Left colon (tissue), 2 donors: ENCODE measurements at regions of chr1 and their contacts with region 1.

Region 1: GRCh38 chr1:27725374-27726173 is at the start of gene FAM76A:
- DNase-seq: peak; percentile 99 to 100
- ATAC-seq: peak; percentile 93
- total RNA-seq, gene FAM76A: 13.9 to 15.4 TPM

Region 2: DNA sequence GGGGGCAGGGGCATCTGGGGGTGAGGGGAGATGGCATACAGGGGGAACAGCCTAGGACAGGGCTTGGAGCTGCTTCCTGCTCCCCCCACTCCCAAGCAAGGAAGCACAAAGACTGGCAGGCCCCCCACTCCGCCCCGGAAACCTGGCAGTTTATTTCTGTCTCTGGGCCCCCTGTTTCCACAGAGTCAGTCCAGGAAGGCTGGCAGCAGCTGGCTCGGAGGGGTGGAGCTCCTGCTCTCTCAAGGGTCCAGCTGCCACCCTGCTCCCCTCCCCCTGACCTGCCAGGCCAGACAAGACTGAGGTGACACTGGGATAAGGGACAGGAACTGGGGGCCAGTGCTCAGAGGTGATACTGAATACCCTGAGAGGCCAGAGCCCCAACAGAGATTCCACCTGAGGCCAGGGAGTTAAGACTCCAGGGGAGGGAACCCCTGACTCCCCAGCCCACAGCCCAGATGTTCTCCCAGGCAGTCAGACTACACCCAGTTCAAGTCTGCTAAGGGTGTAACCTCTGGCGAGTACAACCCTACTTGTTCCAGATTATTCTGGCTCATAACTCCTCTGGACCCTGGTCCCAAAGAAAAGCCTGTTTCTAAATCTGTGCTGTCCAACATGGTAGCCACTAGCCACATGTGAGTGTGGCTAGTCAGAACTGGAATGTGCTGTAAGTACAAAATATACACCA is 147.9 kb before region 1 on chr1:
- intact Hi-C with region 1: no loop called
- DNase-seq: no peak
- ATAC-seq: no peak

Region 3: DNA sequence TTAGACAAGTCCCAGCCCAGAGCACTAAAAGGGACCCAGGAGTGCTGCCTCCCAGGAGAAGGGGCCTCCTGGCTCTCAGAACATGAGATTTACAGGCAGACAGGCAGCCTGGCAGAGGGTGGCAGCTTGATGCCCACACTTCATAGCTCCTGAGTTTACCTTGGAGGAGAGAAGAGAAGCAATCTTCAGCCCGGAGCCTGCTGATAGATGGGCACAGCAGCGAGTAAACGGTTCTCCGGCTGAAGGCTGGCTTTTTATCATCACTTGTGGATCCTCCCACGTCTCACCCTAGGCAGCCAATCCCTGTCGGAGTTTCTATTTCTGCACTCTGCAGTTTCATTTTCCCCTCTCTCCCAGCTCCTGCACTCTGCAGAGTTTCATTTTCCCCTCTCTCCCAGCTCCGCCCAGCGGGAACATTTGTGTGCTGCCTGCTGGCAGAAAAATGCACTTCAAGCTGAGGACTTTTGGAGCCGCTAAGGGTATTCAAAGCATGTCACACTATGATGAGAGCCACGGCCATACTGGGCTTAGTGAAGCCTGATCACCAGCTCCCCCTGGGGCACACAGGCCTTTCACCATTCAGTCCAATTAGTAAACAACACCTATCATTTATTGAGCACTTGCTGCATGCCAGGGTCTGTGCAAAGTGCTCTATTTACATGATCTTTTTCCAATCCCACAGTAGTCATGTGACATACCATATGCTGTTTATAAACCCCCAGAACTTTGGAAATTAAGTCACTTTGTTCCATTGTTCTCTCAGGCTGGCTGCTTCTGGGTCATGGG is 53.4 kb before region 1 on chr1 and contains the start of gene IFI6:
- intact Hi-C with region 1: loop called in 1 of 2 experiments (anchors 5 kb)
- DNase-seq: peak; percentile 78 to 87
- ATAC-seq: peak; percentile 99
- total RNA-seq, gene IFI6: 15.7 to 19.6 TPM

Region 4: GRCh38 chr1:27772933-27773825 is 47.6 kb after region 1 on chr1 and contains the start of gene STX12:
- intact Hi-C with region 1: no loop called
- DNase-seq: peak; percentile 98 to 99
- ATAC-seq: peak; percentile 97
- total RNA-seq, gene STX12: 64.0 to 68.8 TPM